Sigmoid colon (tissue), 7 donors: ENCODE measurements at regions of chr1 and their contacts with region 1.

Region 1: GRCh38 chr1:157156058-157156541 is 17.9 kb upstream of the ETV3 start:
- DNase-seq: peak; percentile 86
- H3K4me3 ChIP-seq: peak overlapping the region in 1 of 4 donors; percentile 3
- H3K27ac ChIP-seq: no peak overlapping the region
- H3K4me1 ChIP-seq: peaks cover 0 to 22% (median 11%) of the 10 kb centered on the region in 4 donors
- H3K27me3 ChIP-seq: no peaks in the 10 kb centered on the region
- CTCF ChIP-seq: peak; percentile 88 to 98 (median 95)
- EP300 ChIP-seq: no peak
- POLR2A ChIP-seq: no peak

Region 2: GRCh38 chr1:156987715-156988114 is 168.4 kb before region 1 on chr1:
- intact Hi-C with region 1: loop called (anchors 10 kb)
- DNase-seq: no peak
- H3K4me3 ChIP-seq: no peak overlapping the region
- H3K27ac ChIP-seq: no peak overlapping the region
- H3K4me1 ChIP-seq: no peaks in the 10 kb centered on the region
- H3K27me3 ChIP-seq: no peaks in the 10 kb centered on the region
- CTCF ChIP-seq: no peak
- EP300 ChIP-seq: no peak
- POLR2A ChIP-seq: no peak

Region 3: DNA sequence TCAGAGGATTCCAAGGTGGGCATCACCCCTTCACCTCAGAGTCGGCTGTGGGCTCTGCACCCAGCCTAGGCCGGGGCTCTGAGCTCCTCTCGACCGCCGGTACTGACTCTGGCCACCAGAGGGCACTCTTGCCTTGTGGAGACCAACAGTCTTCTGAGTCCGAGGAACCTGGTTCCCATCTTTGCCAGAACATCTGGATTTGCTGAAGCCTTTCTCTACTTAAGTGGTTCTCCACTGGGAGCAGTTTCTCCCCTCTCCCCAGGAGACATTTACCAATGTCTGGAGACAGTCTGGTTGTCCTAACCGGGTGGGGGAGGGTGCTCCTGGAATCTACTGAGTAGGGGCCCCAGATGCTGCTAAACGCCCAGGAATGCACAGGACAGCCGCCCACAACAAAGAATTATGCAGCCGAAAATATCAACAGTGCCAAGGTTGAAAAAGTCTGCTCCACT is 65.9 kb before region 1 on chr1:
- intact Hi-C with region 1: loop called (anchors 1 kb)
- DNase-seq: peak; percentile 92
- H3K4me3 ChIP-seq: no peak overlapping the region
- H3K27ac ChIP-seq: no peak overlapping the region
- H3K4me1 ChIP-seq: peaks cover 0 to 16% (median 11%) of the 10 kb centered on the region in 4 donors
- H3K27me3 ChIP-seq: no peaks in the 10 kb centered on the region
- CTCF ChIP-seq: peak; percentile 71 to 93 (median 92)
- EP300 ChIP-seq: no peak
- POLR2A ChIP-seq: no peak